BJ (cell line): ENCODE measurements at regions of chr14 and their contacts with region 1.

Region 1: DNA sequence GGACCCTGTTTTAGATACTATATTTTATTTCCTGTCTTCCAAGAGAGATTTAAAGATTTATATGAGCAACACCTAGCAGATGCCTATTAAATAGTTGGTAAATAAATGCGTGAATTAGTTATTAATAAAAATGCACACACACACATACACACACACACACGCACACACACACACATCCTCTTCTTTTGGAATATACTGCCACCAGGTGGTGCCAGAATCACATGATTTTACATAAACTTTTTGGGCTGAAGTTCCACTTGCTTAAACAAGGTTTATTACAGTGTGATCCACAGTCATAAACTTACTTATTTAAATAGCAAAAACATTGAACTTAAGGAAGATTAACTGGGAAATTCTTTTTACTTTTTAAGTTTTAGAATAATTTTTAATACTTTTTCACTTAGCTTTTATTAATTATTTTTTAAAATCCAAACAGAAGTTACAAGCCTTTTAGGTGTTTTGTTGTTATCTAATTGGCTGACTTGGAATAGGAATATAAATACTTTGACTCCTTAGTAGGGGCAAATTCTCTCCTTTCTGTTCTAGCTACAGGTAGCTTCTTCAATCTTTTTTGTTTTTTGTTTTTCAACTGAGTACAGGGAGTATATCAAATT is 17.5 kb downstream of the RAD51B start:
- DNase-seq: peak; percentile 29
- H3K4me3 ChIP-seq: no peak overlapping the region
- H3K27me3 ChIP-seq: no peaks in the 10 kb centered on the region
- CTCF ChIP-seq: peak; percentile 55

Region 2: DNA sequence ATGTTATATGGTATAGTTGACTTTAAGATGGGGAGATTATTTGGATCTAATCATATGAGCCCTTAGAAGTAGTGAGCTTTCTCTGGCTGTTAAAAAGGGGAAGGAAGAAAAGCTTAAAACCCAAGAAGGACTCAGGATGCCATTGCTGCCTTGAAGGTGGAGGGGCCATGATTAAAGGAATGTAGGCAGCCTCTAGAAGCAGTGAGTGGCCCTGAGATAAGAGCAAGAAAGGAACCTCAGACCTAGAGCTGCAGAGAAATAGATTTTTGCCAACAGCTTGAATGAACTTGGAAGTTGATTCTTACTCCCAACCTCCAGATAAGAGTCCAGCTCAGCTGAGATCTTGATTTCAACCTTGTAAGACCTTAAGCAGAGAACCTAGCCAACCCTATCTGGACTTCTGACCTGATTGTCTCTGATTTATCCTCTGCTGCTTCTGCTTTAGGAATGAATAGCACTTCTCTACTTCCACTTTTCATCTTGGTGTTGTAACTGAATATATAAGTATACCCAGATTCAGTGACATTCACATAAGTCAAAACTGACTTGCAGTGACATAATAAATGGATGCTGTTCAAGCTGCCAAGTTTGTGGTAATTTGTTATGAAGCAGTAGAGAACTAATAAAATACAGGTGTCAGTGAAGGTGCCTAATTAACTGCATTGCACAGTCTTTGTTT is 15.9 kb after region 1 on chr14:
- CTCF ChIA-PET with region 1: interaction called, 14 read pairs
- POLR2A ChIA-PET with region 1: no interaction called
- DNase-seq: no peak
- H3K4me3 ChIP-seq: no peak overlapping the region
- H3K27me3 ChIP-seq: no peaks in the 10 kb centered on the region
- CTCF ChIP-seq: no peak

Region 3: GRCh38 chr14:67908052-67908754 is 71.1 kb after region 1 on chr14:
- CTCF ChIA-PET with region 1: no interaction called
- POLR2A ChIA-PET with region 1: no interaction called
- DNase-seq: no peak
- H3K4me3 ChIP-seq: no peak overlapping the region
- H3K27me3 ChIP-seq: no peaks in the 10 kb centered on the region
- CTCF ChIP-seq: no peak